IMR-90 (cell line): ENCODE measurements at regions of chr6 and their contacts with region 1.

Region 1: DNA sequence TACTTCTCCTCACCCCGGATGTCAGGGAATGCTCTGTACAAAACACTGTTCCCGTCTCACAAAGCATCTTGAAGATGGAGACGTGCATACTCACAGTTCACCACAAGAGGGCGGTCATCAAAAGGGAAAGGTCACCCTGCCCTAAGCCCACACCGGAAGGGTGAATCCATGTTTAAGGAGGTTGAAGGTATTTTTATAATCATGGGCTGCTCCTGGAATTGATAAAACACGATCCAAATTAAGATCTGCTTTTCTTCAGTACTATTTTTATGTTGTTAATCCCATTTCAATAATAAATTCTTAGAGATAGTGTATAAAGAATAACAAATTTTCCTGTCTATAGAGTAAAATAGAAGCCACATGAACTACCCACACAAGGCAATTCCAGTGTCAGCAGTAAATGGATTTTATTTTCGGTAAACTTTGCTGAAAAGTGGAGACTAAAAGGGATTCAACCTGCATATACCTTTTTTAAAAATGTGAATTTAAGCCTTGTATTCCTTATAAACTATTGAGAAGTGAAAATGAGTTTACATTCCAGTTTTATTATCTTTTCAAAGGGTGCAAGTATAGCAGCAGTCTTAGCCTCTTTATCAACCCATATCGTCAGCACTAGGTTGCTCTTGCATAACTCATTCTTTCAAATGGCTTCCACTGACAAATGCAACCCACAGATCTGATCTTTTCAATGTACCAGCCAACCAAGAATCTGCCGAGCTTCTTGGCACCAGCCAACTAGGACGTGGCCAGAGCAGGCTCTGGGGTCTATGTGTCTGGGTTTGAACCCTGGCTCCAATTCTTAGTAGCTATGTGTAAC is 79.7 kb upstream of the MBOAT1 start:
- DNase-seq: peak; percentile 82
- ATAC-seq: peak; percentile 99
- H3K4me3 ChIP-seq: no peak overlapping the region
- H3K27ac ChIP-seq: no peak overlapping the region
- H3K4me1 ChIP-seq: no peaks in the 10 kb centered on the region
- H3K27me3 ChIP-seq: no peaks in the 10 kb centered on the region
- CTCF ChIP-seq: peak; percentile 87
- POLR2A ChIP-seq: peak; percentile 46; the same call in 1 of the 2 replicates
- RAD21 ChIP-seq: peak; percentile 93

Region 2: GRCh38 chr6:18632670-18633410 is 1659.1 kb before region 1 on chr6:
- CTCF ChIA-PET with region 1: no interaction called
- POLR2A ChIA-PET with region 1: no interaction called
- dilution Hi-C with region 1: no loop called
- in situ Hi-C with region 1: no loop called
- intact Hi-C with region 1: no loop called
- DNase-seq: peak; percentile 7
- ATAC-seq: no peak
- H3K4me3 ChIP-seq: no peak overlapping the region
- H3K27ac ChIP-seq: no peak overlapping the region
- H3K4me1 ChIP-seq: no peaks in the 10 kb centered on the region
- H3K27me3 ChIP-seq: no peaks in the 10 kb centered on the region
- CTCF ChIP-seq: no peak
- POLR2A ChIP-seq: no peak
- RAD21 ChIP-seq: no peak

Region 3: GRCh38 chr6:20092071-20092566 is 199.9 kb before region 1 on chr6:
- CTCF ChIA-PET with region 1: no interaction called
- POLR2A ChIA-PET with region 1: no interaction called
- dilution Hi-C with region 1: no loop called
- in situ Hi-C with region 1: no loop called
- intact Hi-C with region 1: loop called (anchors 2 kb)
- DNase-seq: peak; percentile 59
- ATAC-seq: peak; percentile 70
- H3K4me3 ChIP-seq: no peak overlapping the region
- H3K27ac ChIP-seq: no peak overlapping the region
- H3K4me1 ChIP-seq: no peaks in the 10 kb centered on the region
- H3K27me3 ChIP-seq: no peaks in the 10 kb centered on the region
- CTCF ChIP-seq: peak; percentile 69
- POLR2A ChIP-seq: no peak
- RAD21 ChIP-seq: peak; percentile 72

Region 4: DNA sequence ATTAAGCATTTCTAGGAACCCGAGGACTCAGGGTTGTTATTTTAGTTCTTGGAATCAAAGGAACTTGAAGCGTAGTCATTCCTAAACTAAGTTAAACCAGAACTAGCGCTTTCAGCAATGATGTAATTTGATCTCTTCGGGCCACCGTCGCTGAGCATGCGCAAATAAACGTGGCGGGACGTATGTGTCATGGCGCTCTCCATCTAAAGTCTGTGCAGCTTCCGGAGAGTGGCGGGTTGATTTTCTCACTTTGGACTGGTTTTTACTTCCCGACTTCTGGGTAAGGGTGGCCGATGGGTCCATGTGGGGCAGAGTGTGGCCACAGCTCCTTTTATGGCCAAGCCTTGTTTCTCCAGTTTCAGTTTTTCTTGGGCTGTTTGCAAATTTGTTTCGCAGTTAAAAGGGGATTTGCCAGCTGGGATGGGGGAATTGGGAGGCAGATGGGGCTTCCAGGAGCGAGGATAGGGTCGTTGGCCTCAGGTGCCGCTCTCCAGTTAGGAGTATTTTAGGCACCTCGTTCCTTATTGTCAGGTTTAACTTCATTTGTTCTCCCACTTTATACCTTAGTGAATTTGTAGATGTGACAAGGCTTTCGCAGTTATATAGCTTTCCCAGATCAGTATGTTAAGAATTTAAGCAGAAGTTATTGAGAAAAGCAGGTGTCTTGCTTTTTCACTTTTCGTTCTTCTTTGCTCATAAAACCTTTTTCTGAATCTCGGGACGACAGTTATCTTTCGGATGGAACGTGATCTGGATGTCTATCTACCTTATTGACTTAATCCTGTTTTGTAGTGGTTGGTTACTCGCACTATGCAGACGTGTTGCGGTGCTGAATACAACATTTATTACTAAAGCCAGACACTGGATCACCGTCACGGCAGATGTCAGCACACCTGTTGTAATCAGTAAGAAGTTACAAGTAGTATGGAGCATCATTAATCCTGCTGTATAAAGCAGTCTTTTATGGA is 242.6 kb after region 1 on chr6 and contains the start of gene CDKAL1:
- CTCF ChIA-PET with region 1: interaction called, 4 read pairs
- POLR2A ChIA-PET with region 1: no interaction called
- dilution Hi-C with region 1: no loop called
- in situ Hi-C with region 1: loop called (anchors 5 kb)
- intact Hi-C with region 1: no loop called
- DNase-seq: peak; percentile 93
- ATAC-seq: peak; percentile 95
- H3K4me3 ChIP-seq: peak within 1 kb of the TSS; percentile 73
- H3K27ac ChIP-seq: peak within 1 kb of the TSS; percentile 92
- H3K4me1 ChIP-seq: 0 out of 2 replicates have a peak, but pooled peaks cover 1% of the 10 kb centered on the region
- H3K27me3 ChIP-seq: no peaks in the 10 kb centered on the region
- CTCF ChIP-seq: no peak
- POLR2A ChIP-seq: peak; percentile 80
- RAD21 ChIP-seq: no peak
- total RNA-seq, gene CDKAL1: 13.1 and 17.5 TPM in 2 replicates

Region 5: DNA sequence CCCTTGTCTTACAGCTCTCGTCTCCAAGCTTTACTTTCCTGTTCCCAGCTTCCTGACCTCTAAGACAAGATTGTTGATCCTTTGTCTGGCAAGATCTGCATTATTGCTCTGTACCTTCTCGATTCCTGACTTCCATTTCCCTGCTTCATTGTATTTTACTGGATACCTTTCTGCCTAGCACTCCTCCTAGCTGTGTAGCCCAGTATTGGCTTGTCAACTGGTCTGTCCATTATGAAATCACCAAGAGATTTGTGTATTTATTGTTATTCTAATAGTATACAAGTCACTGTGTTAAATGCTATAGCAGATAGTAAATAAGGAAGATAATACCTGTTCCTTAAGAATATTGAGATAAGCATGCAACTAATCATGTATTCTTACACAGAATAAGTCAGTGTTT is 547.7 kb after region 1 on chr6:
- CTCF ChIA-PET with region 1: no interaction called
- POLR2A ChIA-PET with region 1: no interaction called
- dilution Hi-C with region 1: no loop called
- in situ Hi-C with region 1: no loop called
- intact Hi-C with region 1: no loop called
- DNase-seq: no peak
- ATAC-seq: no peak
- H3K4me3 ChIP-seq: no peak overlapping the region
- H3K27ac ChIP-seq: no peak overlapping the region
- H3K4me1 ChIP-seq: no peaks in the 10 kb centered on the region
- H3K27me3 ChIP-seq: no peaks in the 10 kb centered on the region
- CTCF ChIP-seq: no peak
- POLR2A ChIP-seq: no peak
- RAD21 ChIP-seq: no peak